ENCODE measurements at regions of chrX and their contacts with region 1.

Region 1: GRCh38 chrX:39730662-39731397 is 366.9 kb downstream of the BCOR start:
- DNase-seq: peak; percentile 92
- H3K4me3 ChIP-seq: no peak overlapping the region
- H3K27ac ChIP-seq: peak overlapping the region in 3 of 4 donors; percentile 47 to 55 (median 52)
- H3K4me1 ChIP-seq: peaks cover 14 to 42% (median 29%) of the 10 kb centered on the region in 4 donors
- H3K27me3 ChIP-seq: no peaks in the 10 kb centered on the region
- CTCF ChIP-seq: peak; percentile 57 to 62 (median 61)
- EP300 ChIP-seq: no peak
- POLR2A ChIP-seq: no peak

Region 2: GRCh38 chrX:39814391-39814790 is 83.6 kb after region 1 on chrX:
- intact Hi-C with region 1: loop called (anchors 10 kb)
- DNase-seq: no peak
- H3K4me3 ChIP-seq: no peak overlapping the region
- H3K27ac ChIP-seq: peak overlapping the region in 1 of 4 donors; percentile 36
- H3K4me1 ChIP-seq: peaks cover 0 to 20% (median 14%) of the 10 kb centered on the region in 4 donors
- H3K27me3 ChIP-seq: no peaks in the 10 kb centered on the region
- CTCF ChIP-seq: peak; percentile 36 to 50 (median 42)
- EP300 ChIP-seq: no peak
- POLR2A ChIP-seq: no peak

Region 3: DNA sequence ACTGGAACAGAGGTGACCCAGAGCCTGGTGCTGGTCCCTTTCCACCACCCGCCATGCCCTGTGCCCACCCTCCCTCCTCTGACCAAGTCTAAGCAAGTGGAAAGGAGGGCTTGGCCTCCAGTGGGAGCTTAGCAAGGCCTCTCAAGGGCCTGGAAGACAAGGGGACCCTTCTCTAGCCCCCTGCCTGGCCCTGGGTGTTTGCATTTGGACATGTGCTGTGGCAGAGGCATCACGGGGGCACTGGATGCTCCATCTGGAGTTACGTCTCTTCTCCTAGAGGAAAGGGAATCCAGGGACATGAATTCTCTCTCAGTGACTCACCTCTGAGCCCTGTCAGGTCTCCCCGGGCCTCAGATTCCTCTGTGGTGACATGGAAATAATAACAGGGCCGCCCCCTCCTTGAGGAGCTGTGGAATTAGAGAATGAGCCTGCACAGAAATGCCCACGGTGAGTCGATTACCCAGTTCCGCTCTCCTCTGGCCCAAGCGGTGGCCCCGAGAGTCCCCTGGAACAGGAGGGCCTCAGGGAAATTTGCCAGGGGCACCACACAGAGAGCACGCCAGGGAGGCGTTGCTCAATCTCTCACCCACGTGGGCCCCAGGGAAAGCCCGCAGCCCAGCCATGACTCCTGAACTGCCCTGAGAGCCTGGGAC is 177.3 kb after region 1 on chrX:
- intact Hi-C with region 1: loop called (anchors 10 kb)
- DNase-seq: no peak
- H3K4me3 ChIP-seq: peak overlapping the region in 1 of 4 donors; percentile 27
- H3K27ac ChIP-seq: peak overlapping the region; percentile 63 to 72 (median 68)
- H3K4me1 ChIP-seq: peaks cover 8 to 51% (median 35%) of the 10 kb centered on the region in 4 donors
- H3K27me3 ChIP-seq: no peaks in the 10 kb centered on the region
- CTCF ChIP-seq: no peak
- EP300 ChIP-seq: no peak
- POLR2A ChIP-seq: no peak

Region 4: GRCh38 chrX:40013266-40014195 is 282.7 kb after region 1 on chrX:
- intact Hi-C with region 1: loop called (anchors 10 kb)
- DNase-seq: peak; percentile 91
- H3K4me3 ChIP-seq: peak overlapping the region; percentile 56 to 70 (median 61)
- H3K27ac ChIP-seq: peak overlapping the region; percentile 83 to 92 (median 91)
- H3K4me1 ChIP-seq: peaks cover 16 to 55% (median 35%) of the 10 kb centered on the region in 4 donors
- H3K27me3 ChIP-seq: peaks cover 0 to 19% (median 2%) of the 10 kb centered on the region in 4 donors
- CTCF ChIP-seq: no peak
- EP300 ChIP-seq: no peak
- POLR2A ChIP-seq: no peak

Region 5: GRCh38 chrX:40097497-40098263 is 366.9 kb after region 1 on chrX and contains the start of gene BCOR:
- intact Hi-C with region 1: loop called (anchors 10 kb)
- DNase-seq: no peak
- H3K4me3 ChIP-seq: peak within 1 kb of the TSS; percentile 72 to 86 (median 76)
- H3K27ac ChIP-seq: peak within 1 kb of the TSS; percentile 87 to 93 (median 92)
- H3K4me1 ChIP-seq: peaks cover 4 to 91% (median 37%) of the 10 kb centered on the region in 4 donors
- H3K27me3 ChIP-seq: peaks cover 0 to 36% (median 0%) of the 10 kb centered on the region in 4 donors
- CTCF ChIP-seq: no peak
- EP300 ChIP-seq: no peak
- POLR2A ChIP-seq: peak; percentile 58
- total RNA-seq, gene BCOR: 19.9 to 32.5 (median 26.0) TPM

Region 6: GRCh38 chrX:40153335-40154249 is 422.8 kb after region 1 on chrX:
- intact Hi-C with region 1: loop called (anchors 5 kb)
- DNase-seq: no peak
- H3K4me3 ChIP-seq: peak overlapping the region; percentile 53 to 62 (median 55)
- H3K27ac ChIP-seq: peak overlapping the region; percentile 71 to 81 (median 76)
- H3K4me1 ChIP-seq: peaks cover 27 to 66% (median 48%) of the 10 kb centered on the region in 4 donors
- H3K27me3 ChIP-seq: peaks cover 0 to 21% (median 0%) of the 10 kb centered on the region in 4 donors
- CTCF ChIP-seq: peak in 2 of 3 experiments; percentile 11 to 20
- EP300 ChIP-seq: no peak
- POLR2A ChIP-seq: no peak

Region 7: GRCh38 chrX:40266490-40267333 is 535.9 kb after region 1 on chrX:
- intact Hi-C with region 1: loop called (anchors 10 kb)
- DNase-seq: no peak
- H3K4me3 ChIP-seq: peak overlapping the region; percentile 50 to 59 (median 54)
- H3K27ac ChIP-seq: peak overlapping the region; percentile 49 to 73 (median 62)
- H3K4me1 ChIP-seq: peaks cover 0 to 29% (median 17%) of the 10 kb centered on the region in 4 donors
- H3K27me3 ChIP-seq: no peaks in the 10 kb centered on the region
- CTCF ChIP-seq: peak; percentile 52 to 83 (median 66)
- EP300 ChIP-seq: no peak
- POLR2A ChIP-seq: no peak